GM10248 (cell line): ENCODE measurements at regions of chr5 and their contacts with region 1.

Region 1: GRCh38 chr5:33936004-33936380 is 194 bp upstream of the RXFP3 start:
- DNase-seq: peak; percentile 74
- CTCF ChIP-seq: peak; percentile 9

Region 2: GRCh38 chr5:33433303-33434240 is 502.4 kb before region 1 on chr5:
- CTCF ChIA-PET with region 1: interaction called, 20 read pairs
- POLR2A ChIA-PET with region 1: no interaction called
- DNase-seq: no peak
- CTCF ChIP-seq: no peak

Region 3: GRCh38 chr5:33470544-33470943 is 465.4 kb before region 1 on chr5:
- CTCF ChIA-PET with region 1: interaction called, 34 read pairs
- POLR2A ChIA-PET with region 1: no interaction called
- DNase-seq: no peak
- CTCF ChIP-seq: peak; percentile 43

Region 4: GRCh38 chr5:33675958-33676464 is 260.0 kb before region 1 on chr5:
- CTCF ChIA-PET with region 1: interaction called, 10 read pairs
- POLR2A ChIA-PET with region 1: no interaction called
- DNase-seq: peak; percentile 32
- CTCF ChIP-seq: no peak

Region 5: DNA sequence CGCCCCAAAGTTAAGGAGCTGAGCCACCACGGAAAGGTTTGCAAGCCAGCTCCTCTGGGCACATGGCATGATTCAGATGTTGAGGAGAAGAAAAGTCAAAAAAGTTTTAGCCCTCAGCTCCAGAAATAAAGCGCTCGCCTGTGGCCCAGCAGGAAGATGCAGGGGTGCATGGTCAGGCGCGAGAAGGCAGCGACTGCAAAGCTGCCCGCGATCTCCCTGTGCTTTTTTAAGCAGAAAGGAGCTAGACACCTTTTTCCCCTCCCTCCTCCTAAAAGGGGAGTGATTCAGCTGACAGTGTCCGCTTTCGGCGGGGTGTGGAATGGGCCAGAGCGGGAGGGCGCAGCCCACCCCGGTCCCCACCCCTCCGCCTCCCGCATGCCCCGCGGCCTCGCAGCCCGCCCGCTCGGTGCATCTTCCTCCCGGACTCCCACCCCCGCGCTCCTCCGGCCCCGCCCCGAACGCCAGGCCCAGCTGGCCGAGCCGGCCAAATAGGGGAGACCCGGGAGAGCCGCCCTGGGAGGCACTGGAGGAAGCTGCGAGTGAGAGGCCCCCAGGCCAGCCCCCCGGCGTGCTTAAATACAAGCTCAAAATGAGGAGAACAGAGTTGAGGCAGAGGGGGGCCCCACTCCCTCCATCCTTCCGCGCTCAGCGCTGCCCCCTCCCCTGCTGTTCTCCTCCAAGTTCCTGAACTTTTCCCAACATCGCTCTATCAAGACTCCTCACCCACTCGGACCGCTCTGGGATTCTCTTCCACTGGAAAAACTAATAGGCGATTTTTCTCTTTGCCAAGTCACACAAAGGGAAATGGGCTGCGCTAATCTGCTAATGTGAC is 44.0 kb before region 1 on chr5 and contains the start of gene ADAMTS12:
- CTCF ChIA-PET with region 1: interaction called, 15 read pairs
- POLR2A ChIA-PET with region 1: no interaction called
- DNase-seq: peak; percentile 38
- CTCF ChIP-seq: no peak

Region 6: DNA sequence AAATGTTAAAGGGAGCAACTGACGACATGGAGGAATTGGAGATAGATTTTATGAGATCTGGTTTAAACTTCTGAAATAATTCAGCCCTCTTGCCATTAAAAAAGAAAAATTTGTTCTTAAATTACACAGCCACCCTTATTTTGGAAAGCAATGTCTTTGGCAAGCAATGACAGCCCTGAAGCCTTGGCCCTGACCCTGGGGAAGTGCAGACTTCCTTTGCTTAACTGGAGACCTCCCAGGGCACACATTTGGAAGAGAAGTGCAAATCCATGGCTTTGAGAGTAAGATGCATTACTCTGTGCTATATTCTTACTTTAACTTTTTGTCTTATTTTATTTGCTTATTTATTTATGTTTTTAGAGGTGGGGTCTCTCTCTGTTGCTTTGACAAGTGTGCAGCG is 22.2 kb after region 1 on chr5:
- CTCF ChIA-PET with region 1: interaction called, 14 read pairs
- POLR2A ChIA-PET with region 1: no interaction called
- DNase-seq: no peak
- CTCF ChIP-seq: no peak

Region 7: DNA sequence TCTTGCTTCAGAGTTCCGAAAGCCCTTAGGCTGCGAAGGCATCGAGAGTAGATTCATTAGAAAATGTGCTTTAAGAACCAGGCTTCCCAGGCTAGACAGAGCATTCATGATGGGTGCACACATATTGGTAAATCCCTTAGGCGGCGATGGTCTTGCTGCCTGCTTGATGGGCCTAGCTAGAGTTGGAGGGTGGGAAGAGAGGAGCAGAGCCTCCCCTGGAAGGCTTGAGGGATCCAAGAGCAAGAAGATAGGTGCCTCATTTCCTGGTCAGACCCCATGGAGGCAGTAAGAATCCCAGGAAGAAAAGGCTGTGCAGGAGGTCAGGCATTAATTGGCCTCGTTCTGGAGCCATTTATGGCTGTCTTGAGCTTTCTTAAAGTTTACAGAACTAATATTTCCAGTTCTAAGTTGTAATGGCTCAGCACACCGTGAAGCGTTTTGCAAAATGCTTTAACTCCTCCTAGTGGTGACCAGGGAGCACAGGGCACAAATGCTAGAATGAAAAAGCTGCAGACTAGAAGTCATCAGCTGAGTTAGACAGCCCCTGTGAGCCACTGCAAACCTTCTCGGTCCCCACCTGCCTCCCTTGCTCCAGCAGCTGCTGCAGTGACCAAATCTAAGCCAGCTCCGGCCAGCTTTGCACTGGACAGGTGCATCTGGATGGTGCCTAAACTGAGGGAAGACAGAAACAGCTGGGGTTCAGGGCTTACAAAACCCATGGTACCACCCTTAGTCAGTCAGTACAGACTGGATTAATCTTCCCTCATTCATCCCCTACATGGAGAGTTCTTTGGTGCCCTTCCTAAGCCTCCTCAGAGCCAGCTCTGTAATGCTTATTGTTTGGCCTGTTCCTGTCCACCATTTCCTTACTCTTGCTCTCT is 33.8 kb after region 1 on chr5:
- CTCF ChIA-PET with region 1: interaction called, 14 read pairs
- POLR2A ChIA-PET with region 1: no interaction called
- DNase-seq: peak; percentile 71
- CTCF ChIP-seq: peak; percentile 91